ENCODE measurements at regions of chr13 and their contacts with region 1.

Region 1: DNA sequence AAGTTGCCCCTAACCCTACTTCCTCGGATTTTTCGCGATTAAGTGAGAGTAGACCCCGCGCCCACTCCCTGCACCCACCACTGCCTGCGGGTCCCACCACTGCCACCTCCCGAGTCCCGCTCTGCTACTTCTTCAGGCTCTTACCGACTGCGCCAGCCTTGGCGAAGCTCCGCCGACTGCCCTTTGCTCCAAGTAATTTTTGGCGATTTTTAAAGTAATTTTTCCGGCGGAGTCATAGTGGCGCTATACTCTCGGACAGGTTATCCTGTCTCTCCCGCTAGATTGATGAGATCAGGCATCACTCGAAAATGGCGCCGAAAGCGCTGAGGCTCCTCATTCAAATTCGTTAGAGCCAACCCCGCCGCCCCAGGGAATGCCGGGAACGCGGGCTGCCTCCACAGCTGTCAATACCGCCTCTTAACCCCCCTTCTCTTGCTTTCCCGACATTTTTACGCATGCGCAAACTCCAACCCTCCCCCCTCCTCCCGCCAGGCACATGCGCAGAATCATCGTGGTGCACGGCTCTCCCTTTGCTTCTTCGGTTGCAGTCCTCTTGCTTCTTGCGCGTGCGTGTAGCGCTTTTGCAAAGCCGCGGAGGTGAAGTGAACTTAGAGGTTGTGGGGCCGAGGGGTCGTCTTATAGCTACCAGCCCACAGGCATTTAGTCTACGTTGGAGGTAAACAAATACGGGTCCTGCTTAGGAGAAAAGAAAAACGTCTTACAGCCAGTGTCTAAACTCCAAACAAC is 66.6 kb downstream of the KCNRG start:
- DNase-seq: peak; percentile 99
- H3K4me3 ChIP-seq: peak overlapping the region; percentile 65 to 75
- H3K27ac ChIP-seq: peak overlapping the region; percentile 91 to 92
- H3K4me1 ChIP-seq: no peaks in the 10 kb centered on the region
- H3K27me3 ChIP-seq: no peaks in the 10 kb centered on the region
- CTCF ChIP-seq: no peak
- POLR2A ChIP-seq: peak; percentile 67

Region 2: GRCh38 chr13:49996951-49997895 is 84.6 kb before region 1 on chr13 and contains the start of gene TRIM13:
- intact Hi-C with region 1: loop called (anchors 2 kb)
- DNase-seq: peak; percentile 90
- H3K4me3 ChIP-seq: peak within 1 kb of the TSS; percentile 83 to 93
- H3K27ac ChIP-seq: peak within 1 kb of the TSS; percentile 97 to 99
- H3K4me1 ChIP-seq: peaks cover 5% of the 10 kb centered on the region
- H3K27me3 ChIP-seq: no peaks in the 10 kb centered on the region
- CTCF ChIP-seq: peak; percentile 60 to 83 (median 74)
- POLR2A ChIP-seq: peak; percentile 83
- total RNA-seq, gene TRIM13: 24.4 to 52.4 TPM

Region 3: GRCh38 chr13:50123862-50124536 is 42.1 kb after region 1 on chr13:
- intact Hi-C with region 1: loop called (anchors 5 kb)
- DNase-seq: peak; percentile 63
- H3K4me3 ChIP-seq: peak overlapping the region; percentile 95 to 96
- H3K27ac ChIP-seq: peak overlapping the region; percentile 99
- H3K4me1 ChIP-seq: peaks cover 5% of the 10 kb centered on the region
- H3K27me3 ChIP-seq: no peaks in the 10 kb centered on the region
- CTCF ChIP-seq: peak in 1 of 4 experiments; percentile 28
- POLR2A ChIP-seq: peak; percentile 80

Region 4: GRCh38 chr13:50801087-50801931 is 719.5 kb after region 1 on chr13:
- intact Hi-C with region 1: loop called (anchors 5 kb)
- DNase-seq: peak; percentile 44
- H3K4me3 ChIP-seq: no peak overlapping the region
- H3K27ac ChIP-seq: no peak overlapping the region
- H3K4me1 ChIP-seq: no peaks in the 10 kb centered on the region
- H3K27me3 ChIP-seq: no peaks in the 10 kb centered on the region
- CTCF ChIP-seq: peak in 3 of 4 experiments; percentile 50 to 71 (median 64)
- POLR2A ChIP-seq: no peak

Region 5: DNA sequence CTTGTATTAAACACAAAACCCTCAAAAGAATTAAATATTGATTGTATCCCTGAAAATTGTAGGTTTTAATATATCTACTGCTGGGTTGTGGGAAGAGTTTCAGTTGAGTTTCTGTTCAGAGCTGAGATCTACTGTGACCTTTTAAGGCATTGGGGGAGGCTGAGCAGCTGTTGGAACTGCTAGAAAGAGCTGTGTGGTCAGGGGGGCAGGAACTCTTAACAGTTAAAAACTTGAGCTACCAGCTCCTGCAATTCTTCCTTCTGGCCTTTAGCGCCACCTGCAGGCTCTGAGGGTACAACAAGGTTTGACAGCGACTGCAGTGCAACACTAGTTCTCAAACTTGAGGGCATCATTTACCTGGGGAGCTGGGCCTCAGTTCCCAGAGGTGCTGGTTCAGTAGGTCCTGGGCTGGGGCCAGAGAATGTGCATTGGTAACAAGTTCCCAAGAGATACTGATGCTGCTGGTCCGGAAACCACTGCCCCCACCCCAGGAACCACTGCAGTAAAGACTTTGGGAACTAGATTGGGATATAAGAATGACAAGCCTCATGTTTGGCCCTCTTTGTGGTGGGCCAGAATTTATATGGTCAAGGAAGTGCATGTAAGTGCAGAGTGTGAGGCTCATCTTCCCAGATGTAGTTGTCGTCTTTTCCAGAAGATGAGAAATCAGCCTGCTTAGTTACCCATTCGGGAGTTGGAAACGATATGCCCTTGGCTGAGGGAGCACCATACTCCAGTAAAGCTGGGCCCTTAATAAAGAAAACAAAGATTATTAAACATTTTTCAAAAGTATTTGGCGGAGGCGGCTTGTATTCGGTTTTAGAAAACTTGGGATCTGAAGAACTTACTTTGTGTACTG is 830.3 kb after region 1 on chr13:
- intact Hi-C with region 1: loop called (anchors 5 kb)
- DNase-seq: peak; percentile 78
- H3K4me3 ChIP-seq: no peak overlapping the region
- H3K27ac ChIP-seq: peak overlapping the region in 1 of 2 donors; percentile 9
- H3K4me1 ChIP-seq: no peaks in the 10 kb centered on the region
- H3K27me3 ChIP-seq: no peaks in the 10 kb centered on the region
- CTCF ChIP-seq: peak; percentile 71 to 86 (median 82)
- POLR2A ChIP-seq: no peak

Region 6: GRCh38 chr13:51070005-51070649 is 988.3 kb after region 1 on chr13:
- intact Hi-C with region 1: loop called (anchors 5 kb)
- DNase-seq: peak; percentile 82
- H3K4me3 ChIP-seq: no peak overlapping the region
- H3K27ac ChIP-seq: no peak overlapping the region
- H3K4me1 ChIP-seq: no peaks in the 10 kb centered on the region
- H3K27me3 ChIP-seq: no peaks in the 10 kb centered on the region
- CTCF ChIP-seq: peak; percentile 79 to 94 (median 88)
- POLR2A ChIP-seq: no peak